CD8-positive, alpha-beta memory T cell (primary cell): ENCODE measurements at regions of chr7 and their contacts with region 1.

Region 1: GRCh38 chr7:77696198-77697028 is at the start of gene RSBN1L:
- DNase-seq: peak; percentile 97 to 99 (median 98)
- H3K4me3 ChIP-seq: peak within 1 kb of the TSS; percentile 99
- H3K4me3 Mint-ChIP-seq: peak within 1 kb of the TSS; percentile 96 to 99 (median 98)
- H3K27ac ChIP-seq: peak within 1 kb of the TSS; percentile 92
- H3K27ac Mint-ChIP-seq: peak within 1 kb of the TSS; percentile 85 to 99 (median 96)
- H3K4me1 ChIP-seq: peaks cover 30% of the 10 kb centered on the region
- H3K4me1 Mint-ChIP-seq: peaks cover 48 to 71% (median 67%) of the 10 kb centered on the region in 3 donors
- H3K27me3 ChIP-seq: no peaks in the 10 kb centered on the region
- H3K27me3 Mint-ChIP-seq: no peaks in the 10 kb centered on the region
- total RNA-seq, gene RSBN1L: 23.4 to 24.5 TPM

Region 2: DNA sequence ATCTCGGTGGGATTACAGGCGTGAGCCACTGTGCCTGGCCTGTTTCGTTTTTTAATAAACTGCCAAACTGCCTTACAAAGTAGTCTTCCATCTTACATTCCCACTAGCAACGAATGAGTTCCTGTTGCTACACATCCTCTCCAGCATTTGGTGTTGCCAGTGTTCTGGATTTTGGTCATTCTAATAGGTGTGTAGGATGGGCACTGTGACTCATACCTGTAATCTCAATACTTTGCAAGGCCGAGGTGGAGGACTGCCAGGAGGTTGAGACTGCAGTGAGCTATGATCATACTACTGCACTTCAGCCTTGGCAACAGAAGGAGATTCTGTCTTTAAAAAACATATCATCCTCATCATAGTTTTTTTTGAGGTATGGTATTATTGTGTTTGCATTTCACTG is 21.5 kb before region 1 on chr7:
- CTCF ChIA-PET with region 1: no interaction called
- POLR2A ChIA-PET with region 1: no interaction called
- DNase-seq: no peak
- H3K4me3 ChIP-seq: no peak overlapping the region
- H3K4me3 Mint-ChIP-seq: no peak overlapping the region
- H3K27ac ChIP-seq: no peak overlapping the region
- H3K27ac Mint-ChIP-seq: peak overlapping the region in 2 of 8 donors; percentile 13
- H3K4me1 ChIP-seq: no peaks in the 10 kb centered on the region
- H3K4me1 Mint-ChIP-seq: no peaks in the 10 kb centered on the region
- H3K27me3 ChIP-seq: no peaks in the 10 kb centered on the region
- H3K27me3 Mint-ChIP-seq: no peaks in the 10 kb centered on the region

Region 3: DNA sequence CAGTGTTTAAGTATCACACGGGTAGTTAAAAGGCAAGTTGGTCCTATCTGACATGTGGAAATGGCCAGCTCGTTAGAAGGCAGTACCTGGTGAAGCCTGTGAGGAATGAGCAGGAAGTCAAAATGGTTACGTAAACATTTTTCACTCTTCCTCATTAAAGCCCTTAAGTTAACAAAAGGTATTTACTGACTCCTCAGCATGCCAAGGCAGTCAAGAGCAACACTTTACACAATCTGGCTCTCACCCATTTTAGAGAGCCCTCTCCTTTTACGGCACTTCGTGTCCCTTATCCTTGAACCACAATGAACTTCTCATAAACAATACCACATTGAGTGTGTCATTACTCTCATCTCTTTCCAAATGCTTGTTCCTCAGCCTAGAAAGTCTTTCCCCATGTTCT is 11.2 kb before region 1 on chr7:
- CTCF ChIA-PET with region 1: interaction called, 15 read pairs
- POLR2A ChIA-PET with region 1: interaction called, 4 read pairs
- DNase-seq: no peak
- H3K4me3 ChIP-seq: no peak overlapping the region
- H3K4me3 Mint-ChIP-seq: no peak overlapping the region
- H3K27ac ChIP-seq: no peak overlapping the region
- H3K27ac Mint-ChIP-seq: no peak overlapping the region
- H3K4me1 ChIP-seq: peaks cover 16% of the 10 kb centered on the region
- H3K4me1 Mint-ChIP-seq: peaks cover 17 to 32% (median 26%) of the 10 kb centered on the region in 3 donors
- H3K27me3 ChIP-seq: no peaks in the 10 kb centered on the region
- H3K27me3 Mint-ChIP-seq: no peaks in the 10 kb centered on the region

Region 4: DNA sequence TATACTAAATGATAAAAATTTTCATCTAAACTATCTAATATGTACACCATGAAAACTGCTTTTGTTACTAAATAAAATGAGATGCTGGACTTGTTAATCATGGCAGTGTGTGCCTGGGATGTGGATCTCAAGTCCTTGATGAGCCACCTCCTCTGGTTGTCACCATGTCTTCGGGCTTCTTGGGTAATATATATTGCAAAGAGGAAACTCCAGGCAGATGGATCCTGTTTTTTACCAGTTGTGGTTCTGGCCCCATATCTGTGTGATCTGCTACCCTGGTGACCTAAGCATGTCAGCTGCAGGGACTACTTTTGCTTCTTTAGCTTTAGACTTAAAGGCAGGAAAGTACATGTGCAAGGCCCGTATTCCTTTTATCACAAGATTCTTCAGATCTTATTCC is 55.6 kb after region 1 on chr7:
- CTCF ChIA-PET with region 1: no interaction called
- POLR2A ChIA-PET with region 1: interaction called, 11 read pairs
- DNase-seq: no peak
- H3K4me3 ChIP-seq: no peak overlapping the region
- H3K4me3 Mint-ChIP-seq: no peak overlapping the region
- H3K27ac ChIP-seq: no peak overlapping the region
- H3K27ac Mint-ChIP-seq: peak overlapping the region in 4 of 8 donors; percentile 29 to 87 (median 49)
- H3K4me1 ChIP-seq: peaks cover 24% of the 10 kb centered on the region
- H3K4me1 Mint-ChIP-seq: peaks cover 43 to 70% (median 67%) of the 10 kb centered on the region in 3 donors
- H3K27me3 ChIP-seq: no peaks in the 10 kb centered on the region
- H3K27me3 Mint-ChIP-seq: no peaks in the 10 kb centered on the region

Region 5: GRCh38 chr7:77759294-77759889 is 63.0 kb after region 1 on chr7:
- CTCF ChIA-PET with region 1: interaction called, 11 read pairs
- POLR2A ChIA-PET with region 1: no interaction called
- DNase-seq: peak; percentile 47 to 70 (median 55)
- H3K4me3 ChIP-seq: no peak overlapping the region
- H3K4me3 Mint-ChIP-seq: peak overlapping the region in 1 of 7 donors; percentile 23
- H3K27ac ChIP-seq: no peak overlapping the region
- H3K27ac Mint-ChIP-seq: peak overlapping the region in 5 of 8 donors; percentile 4 to 82 (median 56)
- H3K4me1 ChIP-seq: peaks cover 7% of the 10 kb centered on the region
- H3K4me1 Mint-ChIP-seq: peaks cover 39 to 69% (median 64%) of the 10 kb centered on the region in 3 donors
- H3K27me3 ChIP-seq: no peaks in the 10 kb centered on the region
- H3K27me3 Mint-ChIP-seq: no peaks in the 10 kb centered on the region

Region 6: GRCh38 chr7:77958436-77958835 is 262.0 kb after region 1 on chr7:
- CTCF ChIA-PET with region 1: no interaction called
- POLR2A ChIA-PET with region 1: no interaction called
- DNase-seq: no peak
- H3K4me3 ChIP-seq: no peak overlapping the region
- H3K4me3 Mint-ChIP-seq: no peak overlapping the region
- H3K27ac ChIP-seq: no peak overlapping the region
- H3K27ac Mint-ChIP-seq: peak overlapping the region in 3 of 8 donors; percentile 29 to 41 (median 29)
- H3K4me1 ChIP-seq: no peaks in the 10 kb centered on the region
- H3K4me1 Mint-ChIP-seq: no peaks in the 10 kb centered on the region
- H3K27me3 ChIP-seq: no peaks in the 10 kb centered on the region
- H3K27me3 Mint-ChIP-seq: no peaks in the 10 kb centered on the region